CD8-positive, alpha-beta memory T cell (primary cell): ENCODE measurements at regions of chr21 and their contacts with region 1.

Region 1: GRCh38 chr21:33608559-33608958 is 20.1 kb upstream of the DONSON start:
- DNase-seq: no peak
- H3K4me3 ChIP-seq: no peak overlapping the region
- H3K4me3 Mint-ChIP-seq: no peak overlapping the region
- H3K27ac ChIP-seq: no peak overlapping the region
- H3K27ac Mint-ChIP-seq: peak overlapping the region in 2 of 8 donors; percentile 17 to 30
- H3K4me1 ChIP-seq: no peaks in the 10 kb centered on the region
- H3K4me1 Mint-ChIP-seq: peaks cover 0 to 3% (median 3%) of the 10 kb centered on the region in 3 donors
- H3K27me3 ChIP-seq: no peaks in the 10 kb centered on the region
- H3K27me3 Mint-ChIP-seq: no peaks in the 10 kb centered on the region

Region 2: DNA sequence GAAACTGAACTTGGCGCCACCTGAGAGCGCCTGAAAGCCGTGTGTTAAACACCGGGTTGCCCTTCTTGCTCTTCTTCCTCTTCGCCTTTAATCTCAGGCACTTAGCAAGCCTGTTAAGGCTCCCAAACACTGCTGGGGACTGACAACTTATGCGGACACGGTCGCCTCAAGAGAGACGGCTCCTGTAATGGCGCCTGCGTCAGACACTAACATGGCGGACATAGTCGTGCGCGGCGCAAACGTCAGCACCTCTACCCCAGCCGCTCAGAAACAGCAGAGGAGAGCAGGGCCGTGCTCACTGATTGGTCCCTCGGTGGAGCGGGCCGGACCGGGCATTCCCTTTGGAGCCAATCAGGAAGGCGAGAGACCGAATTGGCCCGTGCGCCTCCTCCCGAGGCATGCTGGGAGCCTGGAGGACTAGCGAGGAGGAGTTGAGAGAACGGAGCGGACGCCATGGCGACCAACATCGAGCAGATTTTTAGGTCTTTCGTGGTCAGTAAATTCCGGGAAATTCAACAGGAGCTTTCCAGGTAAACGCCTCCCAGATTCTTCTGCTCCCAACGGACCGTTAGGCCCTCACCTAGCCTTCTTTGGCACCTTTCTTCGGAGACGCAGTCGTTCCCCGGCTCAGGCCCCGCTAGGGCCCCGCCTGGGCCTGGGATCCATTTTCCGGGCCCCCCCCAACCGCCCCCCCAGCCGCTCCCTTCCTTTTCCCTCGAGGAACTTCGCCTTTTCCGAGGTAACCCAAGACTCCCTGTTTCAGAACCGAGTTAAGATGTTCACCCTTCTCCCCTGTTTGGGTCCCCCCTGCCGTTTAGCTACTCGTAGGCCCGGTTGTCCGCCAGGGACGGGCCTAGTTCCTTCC is 65.7 kb before region 1 on chr21 and contains the start of gene SON:
- CTCF ChIA-PET with region 1: interaction called, 13 read pairs
- POLR2A ChIA-PET with region 1: no interaction called
- DNase-seq: peak; percentile 96 to 99 (median 97)
- H3K4me3 ChIP-seq: peak within 1 kb of the TSS; percentile 98
- H3K4me3 Mint-ChIP-seq: peak within 1 kb of the TSS; percentile 93 to 100 (median 98)
- H3K27ac ChIP-seq: peak within 1 kb of the TSS; percentile 99
- H3K27ac Mint-ChIP-seq: peak within 1 kb of the TSS; percentile 99 to 100 (median 100)
- H3K4me1 ChIP-seq: peaks cover 36% of the 10 kb centered on the region
- H3K4me1 Mint-ChIP-seq: peaks cover 51 to 60% (median 54%) of the 10 kb centered on the region in 3 donors
- H3K27me3 ChIP-seq: no peaks in the 10 kb centered on the region
- H3K27me3 Mint-ChIP-seq: peaks cover 0 to 2% of the 10 kb centered on the region in 2 donors
- total RNA-seq, gene SON: 316 to 339 TPM

Region 3: DNA sequence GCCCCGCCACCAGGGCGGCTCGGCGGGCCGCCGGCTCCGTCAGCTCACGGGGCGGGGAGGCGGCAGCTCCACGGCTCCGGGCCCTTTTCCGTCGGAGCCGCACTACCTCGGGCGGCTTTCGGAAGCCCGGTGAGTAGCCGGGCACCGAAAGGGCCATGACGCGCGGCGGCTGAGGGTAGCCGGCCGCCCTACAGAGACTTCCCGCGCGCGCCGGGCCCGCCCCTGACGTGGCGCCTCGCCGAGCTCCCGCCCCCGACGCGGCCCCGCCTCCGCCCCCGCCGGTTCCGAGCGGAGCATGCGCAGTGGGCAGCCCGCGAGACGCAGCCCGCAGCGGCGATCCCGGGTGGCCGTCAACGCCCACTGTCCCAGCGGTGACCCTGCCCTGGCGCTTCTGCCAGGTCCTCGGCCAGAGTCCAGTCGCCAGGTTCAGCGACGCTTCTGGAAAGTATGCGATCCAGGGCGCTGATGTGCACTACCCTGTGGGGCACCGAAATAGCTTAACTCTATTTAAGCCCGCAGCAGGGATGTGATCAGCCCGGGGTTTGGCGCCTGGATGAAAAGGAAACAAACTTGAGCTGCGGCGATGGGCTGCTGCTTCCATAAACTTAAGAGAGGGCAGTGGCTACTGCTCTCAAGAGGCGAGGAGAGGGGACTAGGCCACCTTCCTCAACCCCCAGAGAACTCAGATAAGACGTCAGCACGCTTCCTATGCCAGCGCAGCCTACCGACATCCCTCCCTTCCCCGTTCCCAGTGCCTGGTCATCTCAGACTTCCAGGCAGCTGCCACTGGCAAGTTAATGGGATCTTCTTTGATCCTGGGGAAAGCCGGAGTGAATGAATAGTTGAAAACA is 19.8 kb before region 1 on chr21 and contains the start of gene DONSON:
- CTCF ChIA-PET with region 1: interaction called, 15 read pairs
- POLR2A ChIA-PET with region 1: no interaction called
- DNase-seq: peak; percentile 86 to 89 (median 89)
- H3K4me3 ChIP-seq: peak within 1 kb of the TSS; percentile 97
- H3K4me3 Mint-ChIP-seq: peak within 1 kb of the TSS; percentile 90 to 99 (median 95)
- H3K27ac ChIP-seq: peak within 1 kb of the TSS; percentile 83
- H3K27ac Mint-ChIP-seq: peak within 1 kb of the TSS; percentile 82 to 96 (median 91)
- H3K4me1 ChIP-seq: peaks cover 18% of the 10 kb centered on the region
- H3K4me1 Mint-ChIP-seq: peaks cover 15 to 27% (median 23%) of the 10 kb centered on the region in 3 donors
- H3K27me3 ChIP-seq: no peaks in the 10 kb centered on the region
- H3K27me3 Mint-ChIP-seq: no peaks in the 10 kb centered on the region
- total RNA-seq, gene DONSON: 38.0 to 41.0 TPM

Region 4: DNA sequence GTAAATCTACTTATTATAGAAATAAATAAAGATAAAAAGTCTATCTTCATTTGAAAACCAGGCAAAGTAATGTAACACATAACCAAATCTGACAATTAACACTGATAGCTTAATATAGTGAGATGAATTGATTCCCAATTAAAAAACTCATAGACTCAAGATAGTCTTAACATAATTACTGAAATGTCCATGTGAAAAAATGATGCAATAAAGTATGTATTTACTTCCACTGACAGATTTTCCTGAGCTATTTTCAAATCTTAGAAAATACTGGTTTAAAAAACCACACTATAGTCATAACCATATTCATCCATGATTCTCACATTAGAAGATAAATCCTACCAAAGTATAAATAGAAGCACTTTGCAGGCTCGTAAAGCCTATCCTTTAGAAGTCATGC is 10.5 kb before region 1 on chr21:
- CTCF ChIA-PET with region 1: interaction called, 10 read pairs
- POLR2A ChIA-PET with region 1: no interaction called
- DNase-seq: no peak
- H3K4me3 ChIP-seq: no peak overlapping the region
- H3K4me3 Mint-ChIP-seq: no peak overlapping the region
- H3K27ac ChIP-seq: no peak overlapping the region
- H3K27ac Mint-ChIP-seq: no peak overlapping the region
- H3K4me1 ChIP-seq: no peaks in the 10 kb centered on the region
- H3K4me1 Mint-ChIP-seq: no peaks in the 10 kb centered on the region
- H3K27me3 ChIP-seq: no peaks in the 10 kb centered on the region
- H3K27me3 Mint-ChIP-seq: no peaks in the 10 kb centered on the region

Region 5: GRCh38 chr21:33619726-33620125 is 11.2 kb after region 1 on chr21:
- CTCF ChIA-PET with region 1: interaction called, 15 read pairs
- POLR2A ChIA-PET with region 1: no interaction called
- DNase-seq: no peak
- H3K4me3 ChIP-seq: no peak overlapping the region
- H3K4me3 Mint-ChIP-seq: no peak overlapping the region
- H3K27ac ChIP-seq: no peak overlapping the region
- H3K27ac Mint-ChIP-seq: peak overlapping the region in 2 of 8 donors; percentile 46 to 51
- H3K4me1 ChIP-seq: no peaks in the 10 kb centered on the region
- H3K4me1 Mint-ChIP-seq: no peaks in the 10 kb centered on the region
- H3K27me3 ChIP-seq: no peaks in the 10 kb centered on the region
- H3K27me3 Mint-ChIP-seq: no peaks in the 10 kb centered on the region

Region 6: DNA sequence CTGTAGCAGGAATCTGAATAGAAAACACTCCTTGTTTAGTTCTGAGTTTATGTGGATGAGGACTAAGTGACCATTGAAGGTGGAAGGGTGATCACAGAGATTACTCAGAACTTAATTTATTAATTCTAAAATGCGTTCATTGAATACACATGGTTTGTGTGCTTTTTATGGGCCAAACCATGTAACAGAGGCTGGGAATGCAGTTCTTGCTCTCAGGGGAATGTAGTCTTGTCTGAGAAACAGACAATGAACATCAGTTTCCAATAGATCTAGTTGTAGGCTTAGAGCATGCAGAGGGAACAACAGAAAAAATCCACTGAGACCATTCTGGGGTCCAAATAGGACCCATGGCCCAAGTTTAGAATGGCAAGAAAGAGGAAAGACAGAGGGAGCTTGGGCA is 79.8 kb after region 1 on chr21:
- CTCF ChIA-PET with region 1: no interaction called
- POLR2A ChIA-PET with region 1: no interaction called
- DNase-seq: no peak
- H3K4me3 ChIP-seq: no peak overlapping the region
- H3K4me3 Mint-ChIP-seq: no peak overlapping the region
- H3K27ac ChIP-seq: no peak overlapping the region
- H3K27ac Mint-ChIP-seq: no peak overlapping the region
- H3K4me1 ChIP-seq: no peaks in the 10 kb centered on the region
- H3K4me1 Mint-ChIP-seq: no peaks in the 10 kb centered on the region
- H3K27me3 ChIP-seq: no peaks in the 10 kb centered on the region
- H3K27me3 Mint-ChIP-seq: peaks cover 2 to 24% of the 10 kb centered on the region in 2 donors